ENCODE measurements at regions of chr1 and their contacts with region 1.

Region 1: GRCh38 chr1:156659994-156660751 is 17.0 kb downstream of the NES start:
- H3K4me3 ChIP-seq: peak overlapping the region; percentile 38
- H3K27ac ChIP-seq: peak overlapping the region; percentile 76
- H3K4me1 ChIP-seq: peaks cover 9% of the 10 kb centered on the region; the same call in 1 of the 2 replicates
- CTCF ChIP-seq: peak; percentile 100

Region 2: DNA sequence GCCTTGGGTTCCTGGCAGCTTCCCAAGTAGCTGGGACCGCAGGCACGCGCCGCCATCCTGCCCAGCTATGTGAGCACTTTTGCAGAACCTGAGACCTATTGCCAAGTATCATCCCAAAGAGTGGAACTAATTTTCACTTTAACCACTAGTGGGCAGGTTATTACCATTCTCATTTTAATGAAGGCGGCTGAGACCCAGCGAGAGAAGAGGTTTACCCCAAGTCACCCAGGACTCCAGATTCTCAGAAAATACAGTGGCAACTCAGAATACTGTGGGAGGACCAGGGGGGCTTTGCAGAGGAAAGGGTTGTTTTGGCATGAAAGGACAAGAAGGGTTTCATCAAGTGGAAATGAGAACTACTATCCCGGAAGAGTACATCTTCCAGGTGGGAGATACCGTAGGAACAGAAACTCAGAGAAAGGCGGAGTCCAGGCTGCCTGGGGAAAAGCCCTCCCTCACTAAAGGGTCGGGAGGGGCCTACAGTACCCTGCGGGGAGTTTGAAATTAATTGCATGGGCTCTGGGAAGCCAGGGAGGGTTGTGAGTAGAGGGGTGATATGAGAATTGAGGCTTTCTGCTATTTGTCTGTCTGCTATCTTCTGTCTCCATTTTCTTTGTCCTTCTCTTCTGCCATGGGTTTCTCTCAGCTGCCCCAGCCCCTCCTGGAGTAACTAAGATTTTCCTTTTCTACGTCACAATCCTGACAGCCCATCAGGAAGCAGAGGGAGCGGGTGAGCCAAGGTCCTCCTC is 514.0 kb before region 1 on chr1:
- CTCF ChIA-PET with region 1: no interaction called
- POLR2A ChIA-PET with region 1: no interaction called
- H3K4me3 ChIP-seq: no peak overlapping the region; the same call in 1 of the 2 replicates
- H3K27ac ChIP-seq: no peak overlapping the region
- H3K4me1 ChIP-seq: no peaks in the 10 kb centered on the region
- CTCF ChIP-seq: peak; percentile 58

Region 3: DNA sequence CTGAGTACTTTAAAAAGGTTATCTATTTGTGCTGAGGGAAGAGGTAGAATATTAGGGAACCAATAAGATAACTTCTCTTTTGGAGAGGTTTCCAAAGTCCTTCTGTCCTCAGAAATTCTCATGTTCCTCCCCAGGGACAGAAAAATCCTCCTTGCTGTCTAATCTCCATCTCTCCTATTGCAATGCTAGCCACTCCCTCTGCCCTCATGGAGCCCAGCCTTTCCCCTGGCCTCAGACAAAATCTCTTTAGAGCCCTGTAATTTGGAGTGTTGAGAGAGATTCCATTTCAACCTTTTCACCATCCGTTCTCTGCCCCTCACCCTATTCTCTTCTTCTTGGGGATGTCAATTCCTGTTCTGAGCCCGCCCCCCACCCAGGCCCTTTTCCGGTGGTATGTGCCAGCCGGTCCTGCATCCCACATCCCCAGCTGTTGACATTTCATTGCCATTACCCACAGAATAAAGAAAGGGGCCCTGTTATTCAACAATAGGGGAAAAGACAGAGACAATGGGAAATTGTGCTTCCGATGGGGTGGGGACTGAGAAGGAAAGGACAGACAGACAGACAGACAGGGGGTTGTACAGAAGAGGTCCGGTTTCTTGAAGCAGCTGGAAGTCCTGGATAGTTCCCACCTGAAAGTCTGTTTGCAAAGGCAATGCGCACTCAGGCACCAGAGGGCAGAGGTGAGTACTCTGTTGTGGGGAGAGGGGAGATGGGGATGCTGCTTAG is 41.2 kb before region 1 on chr1 and contains the start of gene HAPLN2:
- CTCF ChIA-PET with region 1: interaction called, 294 read pairs
- POLR2A ChIA-PET with region 1: interaction called, 11 read pairs
- H3K4me3 ChIP-seq: no peak within 1 kb of the TSS
- H3K27ac ChIP-seq: no peak within 1 kb of the TSS
- H3K4me1 ChIP-seq: peaks cover 5% of the 10 kb centered on the region
- CTCF ChIP-seq: peak; percentile 54; the same call in 1 of the 2 replicates

Region 4: DNA sequence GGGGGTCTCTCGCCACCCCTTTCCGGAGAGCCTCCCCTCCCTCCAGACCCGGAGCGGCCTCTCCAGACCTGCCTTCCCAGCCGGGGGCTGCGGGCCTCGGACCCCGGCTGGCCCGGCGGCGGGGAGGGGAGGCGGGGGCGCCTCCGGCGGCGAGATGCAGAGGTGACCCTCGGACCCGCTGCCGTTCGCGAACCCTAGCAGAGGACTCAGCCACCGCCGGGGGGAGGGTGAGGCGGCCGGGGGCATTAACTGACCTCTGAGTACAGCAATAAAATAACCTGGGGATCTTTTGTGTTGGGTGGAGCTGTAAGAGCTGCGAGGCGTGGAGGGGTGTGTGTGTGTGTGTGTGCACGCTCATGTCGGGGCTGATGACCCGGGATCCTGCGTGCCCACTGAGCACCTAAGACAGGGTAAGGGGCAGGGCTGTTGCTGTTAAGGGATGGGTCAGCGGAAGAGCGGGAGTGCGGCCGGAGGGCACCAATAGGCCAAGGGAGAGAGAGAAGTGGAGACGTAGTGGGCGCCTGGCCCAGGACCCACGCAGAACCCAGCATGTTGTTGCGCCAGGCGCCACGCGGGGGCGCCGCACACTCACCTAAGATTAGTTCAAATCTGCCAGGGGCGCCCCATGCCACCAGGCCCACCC is 34.6 kb before region 1 on chr1:
- CTCF ChIA-PET with region 1: interaction called, 294 read pairs
- POLR2A ChIA-PET with region 1: interaction called, 11 read pairs
- H3K4me3 ChIP-seq: peak overlapping the region; percentile 26
- H3K27ac ChIP-seq: no peak overlapping the region; the same call in 1 of the 2 replicates
- H3K4me1 ChIP-seq: no peaks in the 10 kb centered on the region
- CTCF ChIP-seq: peak; percentile 88

Region 5: DNA sequence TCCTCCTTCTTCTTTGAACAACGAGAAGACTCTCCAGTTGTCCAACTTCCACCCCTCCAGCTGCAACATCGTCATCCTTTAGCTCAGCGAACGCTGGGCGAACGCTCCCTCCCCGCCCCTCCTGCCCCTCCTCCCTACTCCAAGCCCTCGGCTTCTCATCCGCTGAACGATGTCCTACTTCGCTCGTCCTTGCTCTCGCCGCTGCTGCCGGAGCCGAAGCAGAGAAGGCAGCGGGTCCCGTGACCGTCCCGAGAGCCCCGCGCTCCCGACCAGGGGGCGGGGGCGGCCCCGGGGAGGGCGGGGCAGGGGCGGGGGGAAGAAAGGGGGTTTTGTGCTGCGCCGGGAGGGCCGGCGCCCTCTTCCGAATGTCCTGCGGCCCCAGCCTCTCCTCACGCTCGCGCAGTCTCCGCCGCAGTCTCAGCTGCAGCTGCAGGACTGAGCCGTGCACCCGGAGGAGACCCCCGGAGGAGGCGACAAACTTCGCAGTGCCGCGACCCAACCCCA is 18.4 kb before region 1 on chr1 and contains the start of gene BCAN:
- CTCF ChIA-PET with region 1: interaction called, 24 read pairs
- POLR2A ChIA-PET with region 1: interaction called, 5 read pairs
- H3K4me3 ChIP-seq: peak within 1 kb of the TSS; percentile 16; the same call in 1 of the 2 replicates
- H3K27ac ChIP-seq: no peak within 1 kb of the TSS
- H3K4me1 ChIP-seq: no peaks in the 10 kb centered on the region
- CTCF ChIP-seq: no peak

Region 6: GRCh38 chr1:156677616-156678596 is 17.7 kb after region 1 on chr1:
- CTCF ChIA-PET with region 1: interaction called, 564 read pairs
- POLR2A ChIA-PET with region 1: interaction called, 20 read pairs
- H3K4me3 ChIP-seq: no peak overlapping the region
- H3K27ac ChIP-seq: no peak overlapping the region
- H3K4me1 ChIP-seq: no peaks in the 10 kb centered on the region
- CTCF ChIP-seq: peak; percentile 86; the same call in 1 of the 2 replicates

Region 7: DNA sequence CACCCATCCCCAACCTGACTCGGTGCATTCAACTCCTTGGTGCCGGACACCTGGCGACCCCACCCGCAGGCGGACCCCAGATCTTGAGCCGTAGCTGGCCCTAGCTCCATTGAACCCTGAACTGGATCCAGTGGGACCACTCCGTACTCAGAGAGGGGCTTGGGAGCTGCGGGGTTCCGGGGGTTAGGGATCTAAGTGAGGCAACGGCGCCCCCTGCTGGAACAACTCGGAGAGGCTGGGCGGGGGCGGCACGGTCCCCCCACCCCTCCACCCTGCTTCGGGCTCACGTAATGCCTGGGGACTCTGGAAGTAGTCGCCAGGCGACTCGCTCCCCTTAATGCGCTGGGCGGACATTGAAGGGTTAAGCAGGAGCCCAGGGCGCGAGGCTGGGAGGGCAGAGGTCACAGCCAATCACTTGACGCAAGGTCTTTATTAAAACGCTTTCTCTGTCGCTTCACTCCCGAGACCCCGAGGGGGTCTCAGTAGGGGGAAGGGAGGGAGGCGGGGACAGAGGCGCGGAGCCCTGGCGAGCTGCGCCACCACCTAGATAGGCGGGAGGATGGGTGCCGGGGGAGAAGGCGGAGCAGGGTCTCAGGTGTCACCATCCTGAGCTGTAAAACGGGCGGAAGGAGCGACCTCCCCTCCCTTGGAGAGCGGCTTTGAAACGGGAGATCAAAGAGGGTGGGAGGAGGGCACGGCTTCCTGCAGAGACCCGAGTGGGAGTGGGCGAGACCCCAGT is 45.9 kb after region 1 on chr1:
- CTCF ChIA-PET with region 1: interaction called, 31 read pairs
- POLR2A ChIA-PET with region 1: interaction called, 3 read pairs
- H3K4me3 ChIP-seq: peak overlapping the region; percentile 36
- H3K27ac ChIP-seq: peak overlapping the region; percentile 39; the same call in 1 of the 2 replicates
- H3K4me1 ChIP-seq: peaks cover 12% of the 10 kb centered on the region
- CTCF ChIP-seq: peak; percentile 92

Region 8: DNA sequence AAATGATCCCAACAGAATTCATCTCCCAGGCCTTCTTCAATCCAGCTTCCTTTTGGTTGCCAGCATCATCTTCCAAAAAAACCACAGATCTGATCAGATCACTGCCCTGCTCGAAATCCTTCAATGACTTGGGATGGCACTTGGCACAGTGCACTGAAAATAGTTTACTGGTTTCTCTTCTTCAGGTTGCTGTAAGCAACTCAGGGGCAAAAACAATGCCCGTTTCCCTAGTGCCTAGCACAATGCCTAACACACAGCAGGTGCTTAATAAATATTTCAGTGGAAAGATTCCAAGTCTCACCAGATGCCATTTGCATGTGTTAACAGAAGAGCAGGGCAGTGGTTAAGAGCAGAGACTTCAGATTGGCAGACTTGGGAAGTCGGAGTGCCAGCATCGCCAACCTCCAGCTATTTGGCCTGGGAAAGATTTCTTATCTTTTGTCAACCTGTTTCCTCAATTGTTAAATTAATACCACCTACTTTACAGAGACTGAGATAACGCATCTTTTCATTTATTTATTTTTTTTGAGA is 57.2 kb after region 1 on chr1:
- CTCF ChIA-PET with region 1: interaction called, 10 read pairs
- POLR2A ChIA-PET with region 1: no interaction called
- H3K4me3 ChIP-seq: no peak overlapping the region
- H3K27ac ChIP-seq: no peak overlapping the region
- H3K4me1 ChIP-seq: no peaks in the 10 kb centered on the region
- CTCF ChIP-seq: no peak